ENCODE measurements at regions of chr15 and their contacts with region 1.

Region 1: DNA sequence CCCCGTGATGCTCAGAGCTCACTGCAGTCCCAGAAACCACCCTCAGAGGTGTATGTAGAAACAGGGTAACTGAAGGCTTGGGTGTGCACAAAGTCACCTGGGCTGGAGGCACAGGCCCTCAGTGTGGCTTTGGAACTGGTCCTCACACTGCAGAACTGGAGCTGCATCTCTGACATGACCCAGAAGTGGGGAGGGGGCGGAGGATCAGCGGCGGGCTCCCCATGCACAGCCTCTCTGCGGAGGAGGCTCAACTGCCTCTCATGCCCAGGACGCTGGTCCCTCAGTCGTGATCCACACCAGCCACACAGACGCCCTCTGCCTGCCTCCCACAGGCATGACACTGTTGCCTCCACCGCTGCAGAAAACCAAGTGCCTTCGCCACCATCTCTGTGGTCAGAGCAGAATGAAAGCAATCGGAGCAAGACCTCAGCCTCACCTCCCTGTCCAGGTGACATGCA is 73.7 kb downstream of the TM2D3 start:
- DNase-seq: peak; percentile 53
- ATAC-seq: peak; percentile 40
- H3K4me3 ChIP-seq: no peak overlapping the region
- H3K27ac ChIP-seq: no peak overlapping the region
- H3K4me1 ChIP-seq: peaks cover 42% of the 10 kb centered on the region
- H3K27me3 ChIP-seq: no peaks in the 10 kb centered on the region
- CTCF ChIP-seq: peak; percentile 56

Region 2: DNA sequence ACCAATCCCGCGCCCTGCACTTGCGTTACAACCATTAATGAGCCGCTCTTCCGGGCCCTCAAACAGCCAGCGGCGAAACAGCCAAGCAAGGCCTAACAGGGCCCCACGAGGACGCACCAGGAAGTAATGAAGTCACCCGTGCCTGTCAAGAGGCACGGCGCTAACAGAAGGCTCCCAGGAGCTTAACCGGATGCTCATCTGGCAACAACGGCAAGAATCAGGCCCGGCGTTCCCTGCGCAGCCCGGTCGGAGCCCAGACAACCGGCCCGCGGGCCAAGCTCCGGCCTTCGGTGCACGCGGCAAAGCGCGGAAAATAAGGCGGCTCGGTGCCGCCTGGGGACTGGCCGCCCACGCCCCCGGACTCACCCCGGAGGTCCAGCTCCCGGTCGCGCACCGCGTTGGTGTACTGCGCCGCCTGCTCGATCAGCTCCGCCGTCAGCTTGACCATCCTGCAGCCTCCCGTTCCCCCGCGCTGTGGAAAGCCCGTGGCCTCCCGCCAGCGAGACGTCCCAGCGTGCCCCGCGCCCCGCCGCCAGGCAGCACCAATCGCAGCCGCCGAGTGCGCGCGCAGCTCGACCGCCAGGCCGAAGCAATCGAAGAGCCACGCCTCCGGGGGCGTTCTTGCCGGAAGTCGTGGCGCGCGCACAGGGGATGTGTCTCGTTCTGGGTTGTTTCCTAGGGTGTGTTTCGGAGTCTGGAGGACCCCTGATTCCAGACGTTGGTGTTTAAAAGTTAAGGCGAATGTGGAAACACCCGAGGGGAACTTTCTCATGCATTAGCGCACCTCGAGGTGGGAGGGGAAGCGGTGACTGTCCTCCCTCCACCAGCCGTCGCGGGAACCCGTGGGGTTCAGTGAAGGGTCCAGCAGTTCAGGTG is 283.5 kb before region 1 on chr15 and contains the start of gene SNRPA1:
- CTCF ChIA-PET with region 1: interaction called, 11 read pairs
- POLR2A ChIA-PET with region 1: no interaction called
- intact Hi-C with region 1: loop called (anchors 10 kb)
- DNase-seq: peak; percentile 95
- ATAC-seq: peak; percentile 62
- H3K4me3 ChIP-seq: peak within 1 kb of the TSS; percentile 100
- H3K27ac ChIP-seq: peak within 1 kb of the TSS; percentile 82
- H3K4me1 ChIP-seq: peaks cover 32% of the 10 kb centered on the region
- H3K27me3 ChIP-seq: no peaks in the 10 kb centered on the region
- CTCF ChIP-seq: no peak
- total RNA-seq, gene SNRPA1: 66.1 and 68.2 TPM in 2 replicates

Region 3: DNA sequence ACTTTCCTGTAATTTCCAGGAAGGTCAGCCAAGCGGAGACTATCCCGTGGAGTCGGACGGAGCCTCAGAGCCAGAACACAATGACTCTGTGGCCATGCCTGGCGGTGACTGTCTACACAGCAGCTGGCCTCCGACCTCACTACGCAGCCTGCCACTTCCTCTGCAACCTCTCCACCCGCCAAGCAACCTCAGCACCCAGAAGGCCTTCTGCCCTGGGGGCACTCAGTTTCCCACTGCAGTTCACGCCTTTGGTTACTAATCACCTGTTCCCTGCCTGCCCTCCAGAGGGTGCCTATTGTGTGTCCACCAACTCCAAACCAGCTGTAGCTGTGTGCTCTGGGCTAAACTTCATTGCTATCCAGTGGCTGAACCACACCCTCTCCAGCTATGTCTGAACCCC is 29.7 kb after region 1 on chr15:
- CTCF ChIA-PET with region 1: no interaction called
- POLR2A ChIA-PET with region 1: no interaction called
- intact Hi-C with region 1: no loop called
- DNase-seq: no peak
- ATAC-seq: no peak
- H3K4me3 ChIP-seq: no peak overlapping the region
- H3K27ac ChIP-seq: no peak overlapping the region
- H3K4me1 ChIP-seq: no peaks in the 10 kb centered on the region
- H3K27me3 ChIP-seq: no peaks in the 10 kb centered on the region; the same call in 1 of the 2 replicates
- CTCF ChIP-seq: no peak

Measured in PC-3 (cell line).